Activated CD4-positive, alpha-beta memory T cell treated with anti-CD3 and anti-CD28 coated beads for 36 hours (primary cell): ENCODE measurements at regions of chr1 and their contacts with region 1.

Region 1: DNA sequence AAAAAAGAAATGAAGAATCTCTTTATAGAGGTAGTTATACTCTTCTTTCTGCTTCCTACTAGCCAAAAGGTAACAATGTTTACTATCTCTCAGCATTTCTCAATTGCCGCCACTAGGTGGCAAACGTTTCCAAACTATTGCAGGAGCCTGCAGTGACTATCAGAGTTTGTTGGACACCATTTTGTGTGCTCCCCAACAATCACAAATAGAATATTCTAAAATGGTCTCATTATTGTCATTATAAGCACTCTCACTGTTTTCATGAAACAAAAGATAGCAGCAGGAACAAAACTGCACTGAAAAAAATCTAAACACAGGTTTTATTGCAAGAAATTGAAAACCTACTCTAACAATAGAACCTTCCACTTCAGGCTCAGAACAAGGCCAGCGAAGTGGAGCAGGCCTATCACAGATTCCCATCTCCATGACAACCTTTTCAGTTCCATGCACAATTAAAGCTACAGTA is 83.9 kb upstream of the PLPPR4 start:
- DNase-seq: peak; percentile 69
- H3K4me3 Mint-ChIP-seq: no peak overlapping the region
- H3K27ac Mint-ChIP-seq: no peak overlapping the region
- H3K4me1 Mint-ChIP-seq: no peaks in the 10 kb centered on the region
- H3K27me3 Mint-ChIP-seq: no peaks in the 10 kb centered on the region

Region 2: GRCh38 chr1:99685516-99686180 is 505.3 kb after region 1 on chr1:
- CTCF ChIA-PET with region 1: interaction called, 4 read pairs
- POLR2A ChIA-PET with region 1: no interaction called
- intact Hi-C with region 1: loop called (anchors 1 kb)
- DNase-seq: peak; percentile 63
- H3K4me3 Mint-ChIP-seq: no peak overlapping the region
- H3K27ac Mint-ChIP-seq: no peak overlapping the region
- H3K4me1 Mint-ChIP-seq: peaks cover 2% of the 10 kb centered on the region
- H3K27me3 Mint-ChIP-seq: peaks cover 10% of the 10 kb centered on the region

Region 3: DNA sequence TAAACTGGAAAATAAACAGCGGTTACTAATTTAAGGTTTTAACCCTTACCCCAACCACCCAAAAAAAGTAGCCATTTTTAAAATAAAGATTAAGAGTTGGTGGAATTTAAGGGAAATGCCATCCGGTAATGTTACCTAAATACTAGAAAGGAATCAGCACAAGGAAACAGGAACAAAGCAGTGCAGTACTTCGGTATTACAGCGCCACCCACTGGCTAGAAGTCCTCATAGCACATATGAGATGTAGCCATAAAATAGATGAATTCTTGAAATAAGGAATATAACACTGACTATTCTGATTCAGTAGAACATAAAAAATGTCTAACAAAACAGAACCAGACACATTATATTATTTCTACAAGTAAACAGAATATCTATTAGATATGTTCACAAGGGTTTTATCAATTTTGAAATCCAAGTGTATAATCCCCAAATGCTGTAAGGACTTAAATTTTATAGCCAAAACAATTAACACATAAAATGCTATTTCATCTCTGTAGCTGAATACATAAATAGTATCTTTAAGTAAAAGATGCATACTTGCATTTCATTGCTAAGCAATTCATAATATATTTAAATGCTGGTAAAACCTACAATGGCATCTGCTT is 527.3 kb after region 1 on chr1:
- CTCF ChIA-PET with region 1: interaction called, 8 read pairs
- POLR2A ChIA-PET with region 1: no interaction called
- intact Hi-C with region 1: loop called (anchors 1 kb)
- DNase-seq: peak; percentile 73
- H3K4me3 Mint-ChIP-seq: no peak overlapping the region
- H3K27ac Mint-ChIP-seq: no peak overlapping the region
- H3K4me1 Mint-ChIP-seq: peaks cover 15% of the 10 kb centered on the region
- H3K27me3 Mint-ChIP-seq: no peaks in the 10 kb centered on the region